ENCODE measurements at regions of chr5 and their contacts with region 1.

Region 1: DNA sequence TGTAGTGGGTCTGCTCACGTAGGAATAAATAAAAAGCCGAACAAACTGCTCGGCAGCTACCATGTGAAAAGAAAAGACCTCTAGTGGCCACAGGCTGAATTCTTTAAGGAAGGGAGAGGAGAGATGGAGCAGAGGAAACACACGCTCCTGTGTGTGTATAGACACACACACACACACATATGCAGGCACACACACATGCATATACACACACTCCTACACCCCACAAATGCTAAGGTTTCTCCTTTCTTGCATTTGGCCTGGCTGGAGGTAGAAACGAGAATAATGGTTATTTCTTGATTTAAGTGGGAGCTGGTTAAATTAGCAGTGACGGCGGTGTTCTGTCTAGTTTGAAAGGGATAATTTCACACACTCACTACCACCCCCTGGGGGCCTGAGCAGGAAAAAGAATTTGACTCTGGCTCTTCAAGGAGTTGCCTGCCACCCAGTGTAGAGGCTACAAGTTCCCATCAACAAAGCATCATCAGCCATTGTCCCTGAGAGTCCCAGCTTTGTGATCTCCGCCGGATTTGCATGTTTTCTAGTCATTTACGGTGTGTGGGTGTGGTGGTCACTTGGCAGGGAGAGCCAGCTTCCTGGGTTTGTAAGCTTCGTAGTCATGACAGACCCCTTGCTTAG is at the start of gene INSYN2B:
- DNase-seq: peak; percentile 77 to 89
- H3K4me3 ChIP-seq: peak within 1 kb of the TSS; percentile 23 to 55 (median 32); a peak in 6 of 8 replicates
- H3K27ac ChIP-seq: no peak within 1 kb of the TSS
- H3K4me1 ChIP-seq: peaks cover 10 to 30% (median 21%) of the 10 kb centered on the region in 4 experiments
- H3K27me3 ChIP-seq: peaks cover 1 to 14% (median 12%) of the 10 kb centered on the region in 4 experiments
- CTCF ChIP-seq: peak; percentile 25 to 98 (median 55)
- EP300 ChIP-seq: no peak
- POLR2A ChIP-seq: no peak
- RAD21 ChIP-seq: peak; percentile 61 to 73
- total RNA-seq, gene INSYN2B: not detected in 2 replicates

Region 2: DNA sequence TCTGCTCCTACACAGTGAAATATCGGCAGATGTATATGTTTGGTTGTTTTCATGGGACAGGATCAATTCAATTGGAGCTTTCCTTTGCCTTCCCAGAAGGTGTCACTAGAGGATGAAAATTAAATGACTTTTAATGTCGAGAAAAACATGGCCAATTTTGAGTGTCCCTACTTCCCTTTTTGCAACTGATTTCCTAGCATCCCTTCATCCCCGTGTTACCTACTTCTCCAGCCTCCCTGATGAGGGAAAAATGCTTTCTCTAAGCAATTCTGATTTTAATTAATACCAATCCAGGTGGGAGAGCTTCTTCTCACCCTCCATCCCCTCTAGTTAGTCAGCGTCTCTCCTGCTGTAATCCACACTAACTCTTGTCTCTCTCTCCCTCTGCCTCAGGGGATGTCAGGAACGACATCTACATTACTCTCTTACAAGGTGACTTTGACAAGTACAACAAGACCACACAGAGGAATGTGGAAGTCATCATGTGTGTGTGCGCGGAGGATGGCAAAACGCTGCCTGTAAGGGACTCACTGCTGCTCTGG is 278.6 kb before region 1 on chr5:
- CTCF ChIA-PET with region 1: interaction called, 40 read pairs
- POLR2A ChIA-PET with region 1: no interaction called
- DNase-seq: no peak
- H3K4me3 ChIP-seq: no peak overlapping the region
- H3K27ac ChIP-seq: no peak overlapping the region
- H3K4me1 ChIP-seq: no peaks in the 10 kb centered on the region
- H3K27me3 ChIP-seq: no peaks in the 10 kb centered on the region
- CTCF ChIP-seq: peak in 2 of 3 experiments; percentile 31 to 54; a peak in 2 of 4 replicates
- EP300 ChIP-seq: no peak
- POLR2A ChIP-seq: no peak
- RAD21 ChIP-seq: peak; percentile 66 to 74

Region 3: GRCh38 chr5:169805937-169806700 is 174.4 kb before region 1 on chr5:
- CTCF ChIA-PET with region 1: interaction called, 17 read pairs
- POLR2A ChIA-PET with region 1: no interaction called
- DNase-seq: no peak
- H3K4me3 ChIP-seq: no peak overlapping the region
- H3K27ac ChIP-seq: no peak overlapping the region
- H3K4me1 ChIP-seq: peaks cover 0 to 22% (median 17%) of the 10 kb centered on the region in 4 experiments; a peak in 6 of 7 replicates
- H3K27me3 ChIP-seq: peaks cover 0 to 2% (median 0%) of the 10 kb centered on the region in 4 experiments; a peak in 1 of 7 replicates
- CTCF ChIP-seq: no peak
- EP300 ChIP-seq: no peak
- POLR2A ChIP-seq: no peak
- RAD21 ChIP-seq: no peak

Region 4: DNA sequence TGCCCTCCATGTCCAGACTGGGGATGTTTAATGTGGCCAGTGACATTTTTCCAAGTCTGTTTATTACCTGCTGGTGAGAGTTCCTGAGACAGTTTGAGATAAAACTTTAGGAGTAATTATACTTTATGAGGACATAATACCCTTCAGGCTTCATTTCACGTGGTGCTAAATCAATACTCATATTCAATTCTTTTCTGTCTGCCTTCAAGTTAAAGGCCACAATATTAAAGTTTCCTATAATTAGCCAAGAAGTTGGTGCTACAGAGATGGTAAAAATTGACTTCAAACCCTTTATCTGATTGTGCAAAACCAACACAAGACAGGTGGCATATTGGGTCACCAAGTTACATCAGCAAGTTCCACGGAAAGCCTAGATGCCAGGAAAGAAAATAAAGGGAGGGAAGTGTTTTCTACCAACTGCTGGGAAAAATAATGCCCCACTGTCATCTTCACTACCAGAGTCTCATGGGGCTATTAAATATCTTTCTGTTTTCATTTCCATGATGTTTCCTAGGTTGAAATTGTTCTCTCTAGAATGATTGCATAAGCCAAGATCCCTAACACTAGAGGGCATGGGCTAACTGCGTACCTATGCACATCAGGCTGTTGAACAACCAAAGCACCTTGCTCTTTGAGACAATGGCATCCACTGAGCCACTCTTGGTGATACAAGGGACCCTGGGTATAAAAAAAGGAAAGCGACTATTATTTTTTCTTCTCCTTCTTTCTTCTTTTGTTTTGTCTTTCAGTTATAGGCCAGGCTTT is 68.9 kb before region 1 on chr5:
- CTCF ChIA-PET with region 1: interaction called, 17 read pairs
- POLR2A ChIA-PET with region 1: no interaction called
- DNase-seq: no peak
- H3K4me3 ChIP-seq: no peak overlapping the region
- H3K27ac ChIP-seq: no peak overlapping the region
- H3K4me1 ChIP-seq: peaks cover 0 to 4% (median 0%) of the 10 kb centered on the region in 4 experiments; a peak in 1 of 7 replicates
- H3K27me3 ChIP-seq: no peaks in the 10 kb centered on the region
- CTCF ChIP-seq: peak in 2 of 3 experiments; percentile 22 to 31; a peak in 2 of 4 replicates
- EP300 ChIP-seq: no peak
- POLR2A ChIP-seq: no peak
- RAD21 ChIP-seq: peak; percentile 44 to 58

Region 5: GRCh38 chr5:169964246-169964645 is 16.3 kb before region 1 on chr5:
- CTCF ChIA-PET with region 1: interaction called, 12 read pairs
- POLR2A ChIA-PET with region 1: no interaction called
- DNase-seq: no peak
- H3K4me3 ChIP-seq: no peak overlapping the region
- H3K27ac ChIP-seq: no peak overlapping the region
- H3K4me1 ChIP-seq: peaks cover 0 to 3% (median 2%) of the 10 kb centered on the region in 4 experiments; a peak in 1 of 7 replicates
- H3K27me3 ChIP-seq: no peaks in the 10 kb centered on the region
- CTCF ChIP-seq: no peak
- EP300 ChIP-seq: no peak
- POLR2A ChIP-seq: no peak
- RAD21 ChIP-seq: no peak

Region 6: GRCh38 chr5:170070556-170071412 is 90.2 kb after region 1 on chr5:
- CTCF ChIA-PET with region 1: interaction called, 10 read pairs
- POLR2A ChIA-PET with region 1: no interaction called
- DNase-seq: peak; percentile 17 to 90
- H3K4me3 ChIP-seq: no peak overlapping the region
- H3K27ac ChIP-seq: no peak overlapping the region
- H3K4me1 ChIP-seq: no peaks in the 10 kb centered on the region
- H3K27me3 ChIP-seq: no peaks in the 10 kb centered on the region; a peak in 1 of 7 replicates
- CTCF ChIP-seq: peak; percentile 74 to 82 (median 81)
- EP300 ChIP-seq: no peak
- POLR2A ChIP-seq: no peak
- RAD21 ChIP-seq: peak; percentile 72 to 78

Region 7: GRCh38 chr5:170226129-170226615 is 245.6 kb after region 1 on chr5:
- CTCF ChIA-PET with region 1: no interaction called
- POLR2A ChIA-PET with region 1: no interaction called
- DNase-seq: no peak
- H3K4me3 ChIP-seq: no peak overlapping the region
- H3K27ac ChIP-seq: no peak overlapping the region
- H3K4me1 ChIP-seq: peaks cover 0 to 5% (median 2%) of the 10 kb centered on the region in 4 experiments; a peak in 4 of 7 replicates
- H3K27me3 ChIP-seq: no peaks in the 10 kb centered on the region; a peak in 1 of 7 replicates
- CTCF ChIP-seq: no peak
- EP300 ChIP-seq: no peak
- POLR2A ChIP-seq: no peak
- RAD21 ChIP-seq: no peak